ENCODE measurements at regions of chr22 and their contacts with region 1.

Region 1: DNA sequence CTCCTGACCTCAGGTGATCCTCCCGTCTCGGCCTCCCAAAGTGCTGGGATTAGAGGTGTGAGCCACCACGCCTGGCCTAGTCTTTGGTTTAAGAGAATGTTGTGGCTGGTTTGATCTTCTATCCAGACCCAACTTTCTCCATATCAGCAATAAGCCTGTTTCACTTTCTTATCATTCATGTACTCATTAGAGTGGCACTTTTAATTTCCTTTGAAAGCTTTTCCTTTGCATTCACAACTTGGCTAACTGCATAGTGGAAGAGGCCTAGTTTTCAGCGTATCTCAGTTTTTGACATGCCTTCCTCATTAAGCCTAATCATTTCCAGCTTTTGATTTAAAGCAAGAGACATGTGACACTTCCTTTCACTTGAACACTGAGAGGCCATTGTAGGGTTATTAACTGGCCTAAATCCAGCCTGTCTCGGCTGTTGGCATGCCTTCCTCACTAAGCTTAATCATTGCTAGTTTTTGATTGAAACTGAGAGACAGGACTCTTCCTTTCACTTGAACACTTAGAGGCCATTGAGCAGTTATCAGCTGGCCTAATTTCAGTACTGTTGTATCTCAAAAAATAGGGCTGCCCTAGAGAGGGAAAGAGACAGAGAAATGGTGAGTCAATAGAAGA is 13.1 kb upstream of the RPL3 start:
- DNase-seq: no peak
- ATAC-seq: no peak
- H3K4me3 Mint-ChIP-seq: no peak overlapping the region
- H3K27ac Mint-ChIP-seq: no peak overlapping the region
- H3K4me1 Mint-ChIP-seq: peaks cover 5% of the 10 kb centered on the region
- H3K27me3 Mint-ChIP-seq: no peaks in the 10 kb centered on the region

Region 2: DNA sequence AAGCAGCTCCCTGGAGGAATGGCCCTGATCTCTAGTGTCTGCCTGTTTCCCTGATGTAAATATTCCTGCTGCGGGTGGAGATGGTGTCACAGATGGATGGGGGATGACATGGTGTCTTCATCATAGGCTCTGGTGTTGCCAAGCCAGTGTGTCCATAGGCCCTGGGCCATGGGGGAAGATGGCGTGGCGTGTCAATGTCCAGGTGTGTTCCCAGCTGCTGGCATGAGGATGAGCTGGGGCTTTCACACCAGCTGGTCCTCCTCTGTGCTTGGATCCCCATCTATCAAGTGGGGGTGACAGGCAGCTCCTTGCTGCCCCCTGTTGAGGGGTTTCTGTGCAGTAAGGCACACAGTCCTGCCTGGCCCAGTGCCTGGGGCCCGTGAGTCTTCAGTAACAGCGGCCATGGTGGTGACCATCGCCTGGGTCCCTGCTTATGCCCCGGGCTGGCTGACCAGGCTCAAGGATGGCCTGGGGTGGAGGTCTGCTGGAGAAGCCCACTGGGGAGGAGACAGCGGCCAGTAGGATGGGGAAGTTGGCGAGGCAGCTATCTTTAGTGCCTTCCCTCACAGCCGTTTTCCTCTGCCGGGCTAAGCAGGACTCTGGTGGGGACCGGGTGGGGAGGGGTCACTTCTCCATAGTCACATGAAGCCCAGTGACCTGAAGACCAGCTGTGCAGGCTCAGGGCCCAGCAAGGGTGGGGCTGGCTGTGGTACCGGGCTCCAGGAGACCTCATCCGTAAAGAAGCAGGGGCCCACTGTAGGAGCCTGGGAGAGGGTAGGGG is 25.8 kb before region 1 on chr22:
- CTCF ChIA-PET with region 1: interaction called, 11 read pairs
- POLR2A ChIA-PET with region 1: interaction called, 3 read pairs
- DNase-seq: peak; percentile 73
- ATAC-seq: peak; percentile 30
- H3K4me3 Mint-ChIP-seq: no peak overlapping the region
- H3K27ac Mint-ChIP-seq: no peak overlapping the region
- H3K4me1 Mint-ChIP-seq: peaks cover 16% of the 10 kb centered on the region
- H3K27me3 Mint-ChIP-seq: no peaks in the 10 kb centered on the region

Region 3: GRCh38 chr22:39343259-39344048 is 10.9 kb after region 1 on chr22:
- CTCF ChIA-PET with region 1: interaction called, 40 read pairs
- POLR2A ChIA-PET with region 1: no interaction called
- DNase-seq: peak; percentile 73
- ATAC-seq: peak; percentile 89
- H3K4me3 Mint-ChIP-seq: no peak overlapping the region
- H3K27ac Mint-ChIP-seq: no peak overlapping the region
- H3K4me1 Mint-ChIP-seq: peaks cover 4% of the 10 kb centered on the region
- H3K27me3 Mint-ChIP-seq: peaks cover 30% of the 10 kb centered on the region

Region 4: GRCh38 chr22:39374191-39374590 is 41.6 kb after region 1 on chr22:
- CTCF ChIA-PET with region 1: no interaction called
- POLR2A ChIA-PET with region 1: no interaction called
- DNase-seq: no peak
- ATAC-seq: no peak
- H3K4me3 Mint-ChIP-seq: no peak overlapping the region
- H3K27ac Mint-ChIP-seq: no peak overlapping the region
- H3K4me1 Mint-ChIP-seq: no peaks in the 10 kb centered on the region
- H3K27me3 Mint-ChIP-seq: no peaks in the 10 kb centered on the region

Measured in activated CD8-positive, alpha-beta T cell treated with anti-CD3 and anti-CD28 coated beads, Interleukin-2, amount 10 ng/mL, durations not matched to agents 7 days and 5 days (primary cell).